Ascending aorta (tissue), 2 donors: ENCODE measurements at regions of chr18 and their contacts with region 1.

Region 1: DNA sequence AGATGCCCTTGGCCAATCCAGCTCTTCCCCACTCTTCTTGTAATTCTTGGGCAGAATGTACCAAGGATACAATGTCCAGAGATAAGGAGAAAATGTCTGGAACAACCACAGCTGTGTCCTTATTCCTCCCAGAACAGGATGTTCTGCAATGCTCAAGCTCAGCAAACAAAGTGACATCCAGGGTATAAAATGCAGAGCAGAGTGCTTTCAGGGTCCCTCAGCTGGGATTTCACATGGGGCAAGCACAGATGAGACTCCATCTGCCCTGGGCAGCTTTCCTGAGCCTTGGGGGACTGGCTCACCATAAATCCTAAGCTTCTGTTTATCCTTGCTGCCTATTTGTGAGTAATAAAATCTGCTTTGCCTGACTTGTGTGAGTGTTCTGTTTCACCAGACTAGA is 127.4 kb downstream of the VAPA start:
- DNase-seq: peak; percentile 19 to 89
- H3K4me3 ChIP-seq: no peak overlapping the region
- H3K27ac ChIP-seq: peak overlapping the region; percentile 78 to 80
- H3K4me1 ChIP-seq: peaks cover 0 to 18% of the 10 kb centered on the region in 2 donors
- H3K27me3 ChIP-seq: no peaks in the 10 kb centered on the region
- CTCF ChIP-seq: no peak

Region 2: DNA sequence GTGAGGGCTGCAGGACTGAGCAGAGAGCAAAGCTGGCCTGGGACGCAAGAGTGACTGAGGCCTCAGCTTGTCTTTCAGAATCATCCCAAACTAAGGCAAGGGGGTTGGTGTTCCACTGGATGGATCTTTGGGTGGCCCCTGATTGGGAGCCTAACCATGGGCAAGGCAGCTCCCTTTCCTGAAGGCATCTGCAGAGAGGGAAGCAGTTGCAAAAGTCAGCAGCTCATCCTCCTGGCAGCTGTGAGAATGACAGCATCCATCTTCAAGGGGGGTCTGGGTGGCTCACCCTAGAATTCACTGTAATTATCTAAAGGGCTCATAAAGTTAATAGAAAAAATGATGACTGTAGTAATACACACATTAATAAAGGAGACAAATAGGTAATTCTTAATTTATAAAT is 379.6 kb before region 1 on chr18:
- intact Hi-C with region 1: no loop called
- DNase-seq: peak in 1 of 2 donors; percentile 46
- H3K4me3 ChIP-seq: no peak overlapping the region
- H3K27ac ChIP-seq: no peak overlapping the region
- H3K4me1 ChIP-seq: no peaks in the 10 kb centered on the region
- H3K27me3 ChIP-seq: no peaks in the 10 kb centered on the region
- CTCF ChIP-seq: no peak

Region 3: DNA sequence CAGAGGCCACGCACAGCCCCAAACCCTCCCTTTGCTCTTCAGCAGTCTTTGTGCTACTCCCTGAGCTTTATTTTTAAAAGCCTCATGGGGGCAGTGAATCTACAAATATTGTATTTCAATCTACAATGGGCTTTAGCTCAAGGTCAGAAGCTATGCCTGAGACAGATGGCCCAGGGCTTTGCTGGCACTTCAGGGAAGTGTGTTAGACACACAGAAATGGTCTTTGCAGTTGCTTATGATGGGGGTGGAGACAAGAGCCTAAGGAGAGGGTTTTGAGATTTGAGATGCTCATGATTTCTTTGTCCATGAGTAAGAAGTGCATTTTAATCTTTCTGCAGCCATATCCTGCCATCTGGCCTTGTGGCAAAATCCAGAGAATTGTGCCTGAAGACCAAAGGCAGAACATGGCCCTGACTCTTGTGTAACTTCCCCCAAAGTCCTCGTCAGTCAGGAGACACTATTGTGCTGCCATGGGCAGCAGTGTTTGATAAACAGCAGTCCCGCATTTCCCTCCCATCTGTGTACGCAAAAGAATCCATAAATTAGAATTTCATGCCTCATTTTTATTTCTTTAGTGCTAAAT is 34.8 kb before region 1 on chr18:
- intact Hi-C with region 1: loop called (anchors 2 kb)
- DNase-seq: no peak
- H3K4me3 ChIP-seq: no peak overlapping the region
- H3K27ac ChIP-seq: peak overlapping the region in 1 of 2 donors; percentile 29
- H3K4me1 ChIP-seq: peaks cover 13 to 16% of the 10 kb centered on the region in 2 donors
- H3K27me3 ChIP-seq: no peaks in the 10 kb centered on the region
- CTCF ChIP-seq: peak in 2 of 3 experiments; percentile 31 to 55

Region 4: GRCh38 chr18:10020171-10020570 is 21.0 kb before region 1 on chr18:
- intact Hi-C with region 1: loop called (anchors 2 kb)
- DNase-seq: peak in 1 of 2 donors; percentile 44
- H3K4me3 ChIP-seq: no peak overlapping the region
- H3K27ac ChIP-seq: no peak overlapping the region
- H3K4me1 ChIP-seq: peaks cover 10 to 27% of the 10 kb centered on the region in 2 donors
- H3K27me3 ChIP-seq: no peaks in the 10 kb centered on the region
- CTCF ChIP-seq: no peak